ENCODE measurements at regions of chr14 and their contacts with region 1.

Region 1: DNA sequence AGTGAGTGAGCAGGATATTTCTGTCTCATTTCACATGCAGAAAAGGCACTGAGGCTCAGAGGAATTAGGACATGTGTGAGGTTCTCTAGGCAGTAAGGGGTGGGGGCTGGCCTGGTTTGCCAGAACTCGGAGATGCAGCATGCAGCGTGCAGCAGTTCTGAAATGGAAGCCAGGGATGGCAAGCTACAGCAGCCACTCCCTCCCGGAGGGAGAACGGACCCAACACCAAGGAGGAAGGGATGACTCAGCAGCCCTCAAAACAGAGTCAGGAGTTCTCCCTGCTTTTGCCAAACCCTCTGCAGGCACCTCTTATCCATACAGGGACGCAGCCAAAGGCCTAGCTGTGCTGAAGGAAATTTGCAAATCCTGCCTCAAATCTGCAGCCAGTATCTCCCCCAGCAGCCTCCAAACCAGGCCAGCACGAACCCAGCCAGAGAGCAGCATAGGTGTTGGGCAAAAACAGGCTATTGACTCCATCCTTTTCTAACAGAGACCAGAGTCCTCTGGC is 10.3 kb upstream of the SERPINA3 start:
- DNase-seq: peak; percentile 71
- H3K4me3 ChIP-seq: no peak overlapping the region
- H3K27ac ChIP-seq: peak overlapping the region; percentile 63 to 85
- H3K4me1 ChIP-seq: peaks cover 14% of the 10 kb centered on the region
- H3K27me3 ChIP-seq: no peaks in the 10 kb centered on the region
- CTCF ChIP-seq: no peak
- POLR2A ChIP-seq: no peak

Region 2: DNA sequence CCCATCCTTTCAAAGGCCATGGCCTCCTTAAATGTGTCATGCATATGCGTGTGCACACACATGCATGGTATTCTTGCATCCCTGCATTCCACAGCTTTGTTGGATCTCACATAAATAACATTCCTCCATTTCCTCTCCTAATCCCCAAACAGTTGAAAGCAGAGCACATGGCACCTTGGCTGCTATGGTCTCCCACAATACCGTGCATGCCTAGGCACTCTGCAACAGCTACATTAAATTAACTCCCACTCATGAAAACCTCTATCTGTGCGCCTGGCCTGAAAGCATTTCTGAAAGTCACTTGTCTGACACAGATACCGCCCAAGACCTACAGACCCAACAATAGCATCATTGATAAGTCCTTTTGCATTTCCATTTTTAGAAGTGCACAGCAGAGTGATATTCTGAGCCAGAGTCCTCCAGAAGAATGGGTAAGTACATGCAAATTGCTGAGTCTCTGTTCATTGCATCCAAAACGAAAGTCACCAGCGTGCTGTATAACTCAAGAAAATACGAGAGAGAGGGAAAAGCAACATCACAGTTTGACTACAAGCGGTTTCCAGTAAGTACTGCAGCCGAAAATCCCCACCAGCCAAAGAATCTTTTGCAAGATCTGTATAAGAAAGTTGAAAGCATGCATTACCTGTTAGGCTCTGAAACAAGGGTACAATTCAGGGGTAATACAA is 626.0 kb before region 1 on chr14:
- intact Hi-C with region 1: no loop called
- DNase-seq: no peak
- H3K4me3 ChIP-seq: peak overlapping the region in 1 of 2 donors; percentile 8
- H3K27ac ChIP-seq: peak overlapping the region; percentile 54 to 62
- H3K4me1 ChIP-seq: no peaks in the 10 kb centered on the region
- H3K27me3 ChIP-seq: no peaks in the 10 kb centered on the region
- CTCF ChIP-seq: no peak
- POLR2A ChIP-seq: no peak

Region 3: GRCh38 chr14:94654071-94654861 is 52.3 kb after region 1 on chr14:
- intact Hi-C with region 1: loop called (anchors 2 kb)
- DNase-seq: no peak
- H3K4me3 ChIP-seq: no peak overlapping the region
- H3K27ac ChIP-seq: peak overlapping the region; percentile 45 to 59
- H3K4me1 ChIP-seq: peaks cover 12% of the 10 kb centered on the region
- H3K27me3 ChIP-seq: no peaks in the 10 kb centered on the region
- CTCF ChIP-seq: no peak
- POLR2A ChIP-seq: no peak